ENCODE measurements at regions of chr4 and their contacts with region 1.

Region 1: DNA sequence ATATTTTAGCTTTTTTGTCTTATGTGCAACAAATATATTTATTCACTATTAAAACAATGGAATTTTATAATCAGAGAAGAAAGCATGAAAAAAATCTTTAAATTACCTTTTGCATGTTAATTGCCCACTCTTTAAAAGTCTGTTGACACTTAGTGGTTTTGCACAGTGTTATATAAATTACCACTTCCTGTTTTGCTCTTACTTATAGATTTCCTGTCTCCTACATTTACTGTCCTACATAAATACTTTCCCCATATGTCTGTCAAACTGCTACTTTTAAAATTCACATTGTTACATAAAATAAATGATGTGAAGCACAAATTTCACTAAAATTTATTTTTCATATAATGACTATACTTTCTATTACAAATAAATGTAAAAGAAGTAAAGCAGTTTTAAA is 161.1 kb upstream of the NDST4 start:
- DNase-seq: no peak
- H3K4me3 ChIP-seq: no peak overlapping the region
- H3K27ac ChIP-seq: no peak overlapping the region
- H3K4me1 ChIP-seq: no peaks in the 10 kb centered on the region
- H3K27me3 ChIP-seq: no peaks in the 10 kb centered on the region
- CTCF ChIP-seq: no peak
- POLR2A ChIP-seq: no peak

Region 2: GRCh38 chr4:115234405-115235093 is 40.0 kb before region 1 on chr4:
- intact Hi-C with region 1: no loop called
- DNase-seq: no peak
- H3K4me3 ChIP-seq: no peak overlapping the region
- H3K27ac ChIP-seq: no peak overlapping the region
- H3K4me1 ChIP-seq: no peaks in the 10 kb centered on the region
- H3K27me3 ChIP-seq: no peaks in the 10 kb centered on the region
- CTCF ChIP-seq: no peak
- POLR2A ChIP-seq: no peak

Region 3: DNA sequence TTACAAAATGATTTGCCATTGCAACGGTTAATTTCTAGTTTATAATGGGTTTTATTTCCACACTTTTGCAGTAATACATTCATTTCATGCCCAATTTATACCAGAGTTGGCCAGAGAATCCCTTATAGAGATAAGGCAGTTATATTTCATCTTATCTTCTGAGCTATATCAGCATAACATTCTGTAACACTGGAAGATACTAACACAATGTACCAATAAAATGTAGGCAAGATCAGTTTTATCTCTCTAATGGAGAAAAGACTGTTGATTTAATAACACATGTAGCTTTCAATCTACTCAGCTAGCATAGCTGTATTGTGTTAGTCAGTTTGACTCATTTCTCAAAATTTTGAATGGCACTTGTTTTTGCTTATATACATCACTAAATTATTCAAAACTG is 1072.2 kb after region 1 on chr4:
- intact Hi-C with region 1: loop called (anchors 5 kb)
- DNase-seq: no peak
- H3K4me3 ChIP-seq: no peak overlapping the region
- H3K27ac ChIP-seq: no peak overlapping the region
- H3K4me1 ChIP-seq: no peaks in the 10 kb centered on the region
- H3K27me3 ChIP-seq: no peaks in the 10 kb centered on the region
- CTCF ChIP-seq: no peak
- POLR2A ChIP-seq: no peak

Measured in vagina (tissue), 2 donors.